ENCODE measurements at regions of chr5 and their contacts with region 1.

Region 1: GRCh38 chr5:79133657-79134451 is 22.2 kb downstream of the BHMT start:
- DNase-seq: peak; percentile 88
- H3K4me3 ChIP-seq: peak overlapping the region; percentile 28
- H3K27ac ChIP-seq: peak overlapping the region; percentile 70
- H3K4me1 ChIP-seq: peaks cover 5% of the 10 kb centered on the region
- H3K27me3 ChIP-seq: no peaks in the 10 kb centered on the region
- CTCF ChIP-seq: peak; percentile 86

Region 2: GRCh38 chr5:78858364-78858763 is 275.5 kb before region 1 on chr5:
- CTCF ChIA-PET with region 1: no interaction called
- POLR2A ChIA-PET with region 1: no interaction called
- intact Hi-C with region 1: no loop called
- DNase-seq: no peak
- H3K4me3 ChIP-seq: no peak overlapping the region
- H3K27ac ChIP-seq: no peak overlapping the region
- H3K4me1 ChIP-seq: no peaks in the 10 kb centered on the region
- H3K27me3 ChIP-seq: no peaks in the 10 kb centered on the region
- CTCF ChIP-seq: no peak

Region 3: DNA sequence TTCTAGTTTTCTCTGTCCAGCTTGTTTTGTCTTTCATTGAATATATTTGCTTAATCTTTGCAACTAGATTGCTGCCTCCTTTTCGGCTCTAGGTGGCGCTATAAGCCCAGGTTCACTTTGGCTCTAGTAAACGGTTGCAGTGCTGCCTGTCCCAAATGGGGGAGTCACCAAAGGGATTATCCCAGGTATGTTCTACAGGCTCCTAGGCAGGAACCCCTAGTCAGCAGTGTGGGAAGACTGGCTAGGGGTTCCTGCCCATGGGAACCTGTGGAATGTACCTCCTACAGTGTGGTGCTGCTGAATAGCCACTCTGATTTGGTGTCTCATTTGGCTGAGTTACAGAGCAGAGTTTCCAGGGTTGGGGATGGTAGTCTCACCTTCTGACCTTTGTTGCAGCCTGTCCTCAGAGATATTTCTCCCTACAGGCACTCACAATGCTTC is 233.9 kb before region 1 on chr5:
- CTCF ChIA-PET with region 1: interaction called, 14 read pairs
- POLR2A ChIA-PET with region 1: no interaction called
- intact Hi-C with region 1: loop called (anchors 5 kb)
- DNase-seq: peak; percentile 76
- H3K4me3 ChIP-seq: no peak overlapping the region
- H3K27ac ChIP-seq: no peak overlapping the region
- H3K4me1 ChIP-seq: no peaks in the 10 kb centered on the region
- H3K27me3 ChIP-seq: no peaks in the 10 kb centered on the region
- CTCF ChIP-seq: peak; percentile 94

Region 4: DNA sequence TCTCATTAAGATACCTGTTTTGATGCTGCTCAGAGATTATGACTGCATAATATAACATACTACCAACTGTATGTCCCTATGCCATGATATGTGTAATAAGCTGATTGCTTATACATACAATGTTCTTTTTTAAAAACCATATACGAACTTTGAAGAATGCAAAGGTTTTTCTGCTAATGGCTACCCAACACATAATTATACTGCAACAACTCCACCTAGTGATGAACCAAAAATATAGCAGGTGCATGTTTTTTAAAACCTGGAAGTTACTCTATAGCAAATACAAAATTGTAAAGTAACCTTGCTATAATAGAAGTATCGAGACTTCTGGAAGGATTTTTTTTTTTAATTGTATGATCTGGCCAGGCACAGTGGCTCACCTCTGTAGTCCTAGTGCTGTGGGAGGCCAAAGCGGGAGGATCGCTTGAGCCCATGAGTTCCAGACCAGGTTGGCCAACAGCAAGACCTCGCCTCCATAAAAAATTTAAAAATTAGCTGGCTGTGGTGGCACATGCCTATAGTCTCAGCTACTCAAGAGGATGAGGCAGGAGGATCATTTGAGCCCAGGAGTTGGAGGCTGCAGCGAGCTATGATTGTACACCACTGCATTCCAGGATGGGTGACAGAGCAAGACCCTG is 331.0 kb after region 1 on chr5:
- CTCF ChIA-PET with region 1: no interaction called
- POLR2A ChIA-PET with region 1: no interaction called
- intact Hi-C with region 1: loop called (anchors 5 kb)
- DNase-seq: peak; percentile 53
- H3K4me3 ChIP-seq: no peak overlapping the region
- H3K27ac ChIP-seq: no peak overlapping the region
- H3K4me1 ChIP-seq: peaks cover 4% of the 10 kb centered on the region
- H3K27me3 ChIP-seq: no peaks in the 10 kb centered on the region
- CTCF ChIP-seq: peak; percentile 78

Region 5: GRCh38 chr5:79672392-79672791 is 538.5 kb after region 1 on chr5:
- CTCF ChIA-PET with region 1: interaction called, 10 read pairs
- POLR2A ChIA-PET with region 1: no interaction called
- intact Hi-C with region 1: no loop called
- DNase-seq: no peak
- H3K4me3 ChIP-seq: no peak overlapping the region
- H3K27ac ChIP-seq: no peak overlapping the region
- H3K4me1 ChIP-seq: no peaks in the 10 kb centered on the region
- H3K27me3 ChIP-seq: no peaks in the 10 kb centered on the region
- CTCF ChIP-seq: no peak

Region 6: DNA sequence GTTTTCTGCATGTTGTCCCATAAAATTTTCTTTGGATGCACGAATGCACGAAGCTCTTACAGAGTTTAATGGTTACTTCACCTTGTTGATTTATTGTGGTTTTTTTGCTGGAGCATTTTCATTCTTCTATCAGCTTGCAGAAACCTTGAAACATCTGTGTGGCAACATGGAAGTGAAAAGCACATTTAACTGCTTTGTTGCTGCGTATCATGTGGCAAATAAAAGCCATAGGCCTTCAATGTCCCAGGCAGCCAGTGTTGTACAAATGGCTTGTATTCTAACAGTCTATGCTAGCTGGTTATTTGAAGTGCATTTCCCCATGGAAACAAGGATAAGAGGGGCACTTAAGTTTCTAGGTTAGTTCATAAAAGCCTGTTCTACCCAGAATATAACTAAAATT is 1783.8 kb after region 1 on chr5:
- CTCF ChIA-PET with region 1: interaction called, 10 read pairs
- POLR2A ChIA-PET with region 1: no interaction called
- intact Hi-C with region 1: no loop called
- DNase-seq: no peak
- H3K4me3 ChIP-seq: no peak overlapping the region
- H3K27ac ChIP-seq: no peak overlapping the region
- H3K4me1 ChIP-seq: peaks cover 5% of the 10 kb centered on the region
- H3K27me3 ChIP-seq: no peaks in the 10 kb centered on the region
- CTCF ChIP-seq: no peak

Measured in A673 (cell line).